ENCODE measurements at regions of chr10 and their contacts with region 1.

Region 1: GRCh38 chr10:102785621-102786217 is 42.0 kb downstream of the WBP1L start:
- H3K4me3 Mint-ChIP-seq: peak overlapping the region; percentile 7
- H3K27ac Mint-ChIP-seq: peak overlapping the region; percentile 57
- H3K4me1 Mint-ChIP-seq: peaks cover 70% of the 10 kb centered on the region
- H3K27me3 Mint-ChIP-seq: no peaks in the 10 kb centered on the region

Region 2: DNA sequence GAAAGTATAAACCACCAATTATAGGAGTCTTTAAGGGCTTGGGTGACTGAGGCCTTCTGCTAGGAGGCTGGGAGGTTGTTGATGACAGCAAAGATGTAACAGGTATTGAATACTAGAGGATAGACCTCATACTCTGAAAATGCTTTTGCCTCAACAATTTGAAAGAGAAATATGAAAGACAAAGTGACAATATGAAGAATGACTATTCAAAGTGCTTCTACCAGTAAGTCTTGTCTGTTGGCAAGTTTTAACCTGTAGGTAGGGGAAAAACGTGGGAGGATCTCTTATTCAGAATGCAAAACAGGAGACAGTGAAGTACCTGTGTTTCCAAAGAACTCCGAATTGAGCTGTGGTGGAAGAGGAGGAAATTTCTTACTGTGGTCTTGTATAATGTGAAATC is 502.2 kb before region 1 on chr10:
- intact Hi-C with region 1: no loop called
- H3K4me3 Mint-ChIP-seq: no peak overlapping the region
- H3K27ac Mint-ChIP-seq: no peak overlapping the region
- H3K4me1 Mint-ChIP-seq: peaks cover 21% of the 10 kb centered on the region
- H3K27me3 Mint-ChIP-seq: no peaks in the 10 kb centered on the region

Region 3: DNA sequence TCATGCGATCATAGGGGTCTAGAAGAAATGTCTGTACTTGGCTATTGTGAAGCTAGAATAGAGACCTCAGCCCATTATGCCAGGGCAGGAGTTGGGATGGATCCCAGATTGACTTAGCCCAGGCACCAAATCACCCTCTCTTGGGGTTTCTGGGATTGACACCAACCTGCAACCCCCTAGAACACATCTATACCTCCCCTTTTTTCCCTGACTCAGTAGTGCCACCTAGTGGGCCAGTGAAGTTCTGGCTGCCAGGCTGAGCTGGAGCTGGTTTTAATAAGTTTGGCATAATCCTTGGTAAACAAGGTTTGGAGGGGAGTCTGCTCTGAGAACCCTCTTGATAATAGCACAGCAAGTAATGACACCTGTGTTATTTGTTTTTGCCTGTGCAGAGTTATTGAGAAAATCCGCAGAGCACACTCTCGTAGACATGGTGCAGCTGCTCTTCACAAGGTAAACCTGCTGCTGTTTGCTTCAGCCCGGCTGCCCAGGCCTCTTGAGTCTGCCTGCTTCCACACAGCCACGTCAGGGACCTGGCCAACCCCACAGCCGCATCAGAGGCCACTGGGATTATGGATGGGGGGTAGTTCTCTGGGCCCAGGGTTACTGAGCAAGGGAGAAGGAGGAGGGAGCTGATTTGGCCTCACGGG is 433.5 kb before region 1 on chr10:
- intact Hi-C with region 1: no loop called
- H3K4me3 Mint-ChIP-seq: no peak overlapping the region
- H3K27ac Mint-ChIP-seq: no peak overlapping the region
- H3K4me1 Mint-ChIP-seq: no peaks in the 10 kb centered on the region
- H3K27me3 Mint-ChIP-seq: no peaks in the 10 kb centered on the region

Region 4: GRCh38 chr10:102752934-102753664 is 32.6 kb before region 1 on chr10:
- intact Hi-C with region 1: loop called (anchors 5 kb)
- H3K4me3 Mint-ChIP-seq: no peak overlapping the region
- H3K27ac Mint-ChIP-seq: peak overlapping the region; percentile 56
- H3K4me1 Mint-ChIP-seq: peaks cover 49% of the 10 kb centered on the region
- H3K27me3 Mint-ChIP-seq: no peaks in the 10 kb centered on the region